ENCODE measurements at regions of chr2 and their contacts with region 1.

Region 1: DNA sequence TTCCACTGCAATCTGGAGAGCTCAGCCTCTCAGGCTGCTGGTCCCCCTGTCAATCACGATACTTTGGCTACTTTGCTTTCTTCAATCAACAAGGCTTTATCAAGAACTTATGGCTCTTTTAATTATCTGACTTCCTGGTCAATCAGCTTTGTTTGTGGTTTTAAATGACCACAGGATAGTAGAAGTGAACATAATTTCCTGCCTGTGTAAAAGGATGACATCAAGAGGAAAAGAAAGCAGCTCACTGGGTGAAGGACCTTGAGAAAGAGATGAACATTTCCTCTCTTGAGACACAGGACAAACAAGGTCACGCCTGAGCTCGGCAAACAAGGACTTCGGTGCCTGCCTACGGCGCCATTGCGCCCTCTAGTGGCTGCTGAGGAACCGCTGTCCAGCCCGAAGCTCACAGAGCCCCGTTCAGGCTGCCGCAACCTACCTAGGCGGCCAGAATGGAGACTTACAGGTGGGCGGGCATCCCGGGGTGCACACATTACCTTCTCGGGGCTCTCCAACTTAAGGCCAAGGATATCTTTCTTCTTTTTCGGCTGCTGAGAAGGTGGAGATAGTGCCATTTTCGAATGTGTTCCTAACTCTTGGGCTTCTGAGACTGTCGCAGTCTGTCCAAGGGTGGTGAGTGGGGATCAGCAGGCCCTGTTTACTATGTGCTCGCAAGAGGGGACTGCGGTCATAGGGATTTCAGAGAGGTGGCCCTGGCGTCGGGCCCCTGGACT is 54.0 kb downstream of the IL1RL2 start:
- DNase-seq: peak; percentile 87
- H3K4me3 Mint-ChIP-seq: no peak overlapping the region
- H3K27ac Mint-ChIP-seq: no peak overlapping the region
- H3K4me1 Mint-ChIP-seq: peaks cover 6% of the 10 kb centered on the region
- H3K27me3 Mint-ChIP-seq: no peaks in the 10 kb centered on the region
- CTCF ChIP-seq: peak; percentile 97

Region 2: DNA sequence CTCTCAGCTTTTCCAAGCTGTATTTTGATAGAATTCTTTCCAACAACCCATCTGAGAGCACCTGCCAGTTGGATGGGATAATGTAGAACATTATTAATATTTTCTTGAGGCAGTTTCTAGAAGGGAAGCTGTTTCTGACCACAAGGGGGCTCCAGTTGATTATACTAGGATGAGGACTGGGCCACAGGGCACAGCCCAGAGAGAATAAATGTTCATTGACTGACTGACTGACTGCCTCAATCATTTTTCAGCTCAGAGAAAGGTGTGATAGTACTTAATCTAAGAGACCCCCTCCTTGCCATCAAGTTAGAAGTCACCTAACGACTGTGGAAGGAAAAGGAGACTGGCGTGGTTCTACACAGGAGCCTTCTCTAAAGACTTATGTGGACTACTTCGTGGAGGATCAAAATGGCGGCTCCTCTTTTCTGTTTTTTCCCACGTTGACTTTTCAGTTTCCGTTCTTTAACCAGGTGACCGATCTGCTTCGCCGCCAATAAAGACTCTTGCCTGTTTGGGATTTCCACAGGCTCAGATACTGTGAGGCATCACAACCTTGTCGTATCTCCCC is 821.6 kb before region 1 on chr2:
- CTCF ChIA-PET with region 1: interaction called, 6 read pairs
- POLR2A ChIA-PET with region 1: no interaction called
- intact Hi-C with region 1: loop called (anchors 5 kb)
- DNase-seq: peak; percentile 75
- H3K4me3 Mint-ChIP-seq: no peak overlapping the region
- H3K27ac Mint-ChIP-seq: no peak overlapping the region
- H3K4me1 Mint-ChIP-seq: peaks cover 6% of the 10 kb centered on the region
- H3K27me3 Mint-ChIP-seq: no peaks in the 10 kb centered on the region
- CTCF ChIP-seq: peak; percentile 67

Region 3: GRCh38 chr2:101942851-101943250 is 298.0 kb before region 1 on chr2:
- CTCF ChIA-PET with region 1: no interaction called
- POLR2A ChIA-PET with region 1: no interaction called
- intact Hi-C with region 1: no loop called
- DNase-seq: no peak
- H3K4me3 Mint-ChIP-seq: no peak overlapping the region
- H3K27ac Mint-ChIP-seq: no peak overlapping the region
- H3K4me1 Mint-ChIP-seq: no peaks in the 10 kb centered on the region
- H3K27me3 Mint-ChIP-seq: no peaks in the 10 kb centered on the region
- CTCF ChIP-seq: no peak

Region 4: DNA sequence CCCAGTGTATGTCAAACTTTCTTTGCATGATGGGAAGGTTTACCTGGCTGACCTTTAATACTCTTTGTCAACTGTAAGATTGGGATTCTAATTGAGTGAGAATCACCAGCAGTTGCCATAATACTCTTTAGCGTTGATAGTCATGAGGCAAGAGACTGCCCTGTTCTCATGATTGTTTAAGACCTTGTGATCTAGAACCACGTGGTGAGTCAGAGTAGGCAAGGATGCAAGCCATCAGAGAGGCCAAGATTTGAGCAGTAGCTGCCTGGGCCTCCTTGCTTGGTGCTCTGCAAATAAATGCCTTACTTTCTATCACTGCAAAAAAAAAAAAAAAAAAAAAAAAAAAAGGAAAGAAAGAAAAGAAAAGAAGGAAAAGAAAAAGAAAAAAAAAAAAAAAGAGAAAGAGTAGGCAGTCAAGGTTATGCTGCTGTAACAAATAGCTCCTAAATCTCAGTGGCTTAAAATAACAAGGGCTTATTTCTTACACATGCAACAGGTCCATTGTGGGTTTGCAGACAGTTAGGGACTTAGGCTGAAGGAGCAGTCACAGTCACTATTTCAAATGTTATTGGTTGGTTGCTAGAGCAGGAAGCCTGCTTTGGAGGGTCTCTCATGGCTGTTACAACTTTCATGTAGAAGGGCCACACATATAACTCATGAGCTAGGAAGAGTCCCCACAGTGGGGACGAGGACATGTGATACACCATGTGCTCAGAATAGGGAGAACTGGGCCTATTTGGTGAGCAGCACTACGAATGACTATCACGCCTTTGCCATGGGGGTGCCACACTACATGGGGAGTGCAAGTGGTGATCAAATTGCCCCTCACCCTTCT is 227.4 kb before region 1 on chr2:
- CTCF ChIA-PET with region 1: interaction called, 51 read pairs
- POLR2A ChIA-PET with region 1: interaction called, 4 read pairs
- intact Hi-C with region 1: no loop called
- DNase-seq: no peak
- H3K4me3 Mint-ChIP-seq: no peak overlapping the region
- H3K27ac Mint-ChIP-seq: no peak overlapping the region
- H3K4me1 Mint-ChIP-seq: no peaks in the 10 kb centered on the region
- H3K27me3 Mint-ChIP-seq: no peaks in the 10 kb centered on the region
- CTCF ChIP-seq: no peak

Region 5: GRCh38 chr2:102122110-102122509 is 118.7 kb before region 1 on chr2:
- CTCF ChIA-PET with region 1: interaction called, 10 read pairs
- POLR2A ChIA-PET with region 1: interaction called, 3 read pairs
- intact Hi-C with region 1: no loop called
- DNase-seq: no peak
- H3K4me3 Mint-ChIP-seq: no peak overlapping the region
- H3K27ac Mint-ChIP-seq: peak overlapping the region; percentile 27
- H3K4me1 Mint-ChIP-seq: peaks cover 19% of the 10 kb centered on the region
- H3K27me3 Mint-ChIP-seq: no peaks in the 10 kb centered on the region
- CTCF ChIP-seq: no peak

Region 6: DNA sequence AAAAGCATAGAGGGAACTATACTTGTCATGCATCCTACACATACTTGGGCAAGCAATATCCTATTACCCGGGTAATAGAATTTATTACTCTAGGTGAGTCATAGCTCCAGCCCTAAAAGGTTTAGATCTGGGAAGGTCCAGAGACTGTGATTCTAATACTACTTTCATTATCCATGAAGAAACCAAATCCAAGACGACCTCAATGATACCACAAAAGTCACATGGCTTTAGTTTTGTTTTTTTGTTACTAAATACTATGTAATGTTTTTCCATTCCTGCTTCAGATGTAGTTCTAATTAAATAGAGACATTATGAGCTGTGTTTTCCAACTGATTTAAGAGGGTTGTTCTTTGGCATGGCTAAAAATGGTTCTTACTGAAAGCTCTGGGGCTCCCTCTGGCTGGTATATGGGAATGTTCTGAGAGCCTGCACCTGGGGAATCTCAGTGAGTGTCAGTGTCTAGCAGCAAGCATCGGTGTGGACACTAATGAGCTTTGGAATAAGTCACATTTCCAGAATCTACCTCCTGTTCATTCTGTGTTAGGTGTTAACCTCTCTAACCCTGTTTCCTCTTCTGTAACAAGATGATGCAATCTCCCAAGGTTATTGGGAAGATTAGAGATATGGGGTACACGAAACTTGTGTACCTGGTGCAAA is 74.5 kb before region 1 on chr2:
- CTCF ChIA-PET with region 1: interaction called, 54 read pairs
- POLR2A ChIA-PET with region 1: interaction called, 9 read pairs
- intact Hi-C with region 1: loop called (anchors 2 kb)
- DNase-seq: peak; percentile 68
- H3K4me3 Mint-ChIP-seq: no peak overlapping the region
- H3K27ac Mint-ChIP-seq: no peak overlapping the region
- H3K4me1 Mint-ChIP-seq: peaks cover 9% of the 10 kb centered on the region
- H3K27me3 Mint-ChIP-seq: no peaks in the 10 kb centered on the region
- CTCF ChIP-seq: peak; percentile 56

Region 7: GRCh38 chr2:102251042-102251848 is 10.4 kb after region 1 on chr2:
- CTCF ChIA-PET with region 1: interaction called, 41 read pairs
- POLR2A ChIA-PET with region 1: no interaction called
- intact Hi-C with region 1: no loop called
- DNase-seq: no peak
- H3K4me3 Mint-ChIP-seq: no peak overlapping the region
- H3K27ac Mint-ChIP-seq: no peak overlapping the region
- H3K4me1 Mint-ChIP-seq: peaks cover 16% of the 10 kb centered on the region
- H3K27me3 Mint-ChIP-seq: no peaks in the 10 kb centered on the region
- CTCF ChIP-seq: no peak

Region 8: GRCh38 chr2:102442967-102443828 is 202.4 kb after region 1 on chr2:
- CTCF ChIA-PET with region 1: interaction called, 57 read pairs
- POLR2A ChIA-PET with region 1: interaction called, 4 read pairs
- intact Hi-C with region 1: loop called (anchors 2 kb)
- DNase-seq: peak; percentile 48
- H3K4me3 Mint-ChIP-seq: no peak overlapping the region
- H3K27ac Mint-ChIP-seq: no peak overlapping the region
- H3K4me1 Mint-ChIP-seq: peaks cover 12% of the 10 kb centered on the region
- H3K27me3 Mint-ChIP-seq: no peaks in the 10 kb centered on the region
- CTCF ChIP-seq: peak; percentile 84

Region 9: GRCh38 chr2:102538491-102538890 is 297.7 kb after region 1 on chr2:
- CTCF ChIA-PET with region 1: no interaction called
- POLR2A ChIA-PET with region 1: no interaction called
- intact Hi-C with region 1: no loop called
- DNase-seq: no peak
- H3K4me3 Mint-ChIP-seq: no peak overlapping the region
- H3K27ac Mint-ChIP-seq: no peak overlapping the region
- H3K4me1 Mint-ChIP-seq: no peaks in the 10 kb centered on the region
- H3K27me3 Mint-ChIP-seq: no peaks in the 10 kb centered on the region
- CTCF ChIP-seq: no peak

Region 10: DNA sequence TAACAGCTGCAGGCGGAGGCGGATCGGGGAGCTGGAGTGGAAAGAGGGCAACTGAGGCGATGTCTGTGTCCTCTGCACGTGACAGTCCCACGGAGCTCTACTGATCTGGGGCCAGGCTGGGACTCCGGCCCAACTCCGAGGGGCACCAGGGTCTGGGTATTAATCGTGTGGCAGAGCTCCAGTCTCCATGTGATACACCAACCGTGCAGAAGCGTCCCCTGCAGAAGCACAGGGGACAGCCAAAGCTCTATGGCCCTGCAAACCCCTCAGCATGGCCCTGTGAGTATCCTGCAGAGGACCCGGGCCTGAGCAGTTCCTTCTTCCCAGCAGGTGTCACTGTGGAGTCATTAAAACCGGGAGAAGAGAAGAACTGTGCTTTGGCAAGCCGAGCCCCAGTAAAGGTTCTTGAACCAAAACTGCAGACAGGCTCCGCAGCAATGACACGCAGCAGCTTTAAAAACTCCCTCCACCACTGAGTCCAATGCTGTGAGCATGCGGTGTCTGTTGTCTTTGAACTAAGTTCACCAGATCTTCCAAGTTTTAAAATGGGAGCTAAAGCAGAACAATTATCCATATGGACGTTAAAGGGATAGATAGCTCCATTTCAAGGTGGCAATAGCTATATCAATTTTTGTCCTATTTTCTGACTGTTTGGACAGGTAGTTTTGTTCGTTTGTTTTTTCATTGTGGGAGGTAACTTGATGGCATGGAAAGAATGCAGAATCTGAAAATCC is 600.5 kb after region 1 on chr2:
- CTCF ChIA-PET with region 1: no interaction called
- POLR2A ChIA-PET with region 1: no interaction called
- intact Hi-C with region 1: no loop called
- DNase-seq: peak; percentile 65
- H3K4me3 Mint-ChIP-seq: no peak overlapping the region
- H3K27ac Mint-ChIP-seq: no peak overlapping the region
- H3K4me1 Mint-ChIP-seq: no peaks in the 10 kb centered on the region
- H3K27me3 Mint-ChIP-seq: no peaks in the 10 kb centered on the region
- CTCF ChIP-seq: peak; percentile 55